Caco-2 (cell line): ENCODE measurements at regions of chr2 and their contacts with region 1.

Region 1: DNA sequence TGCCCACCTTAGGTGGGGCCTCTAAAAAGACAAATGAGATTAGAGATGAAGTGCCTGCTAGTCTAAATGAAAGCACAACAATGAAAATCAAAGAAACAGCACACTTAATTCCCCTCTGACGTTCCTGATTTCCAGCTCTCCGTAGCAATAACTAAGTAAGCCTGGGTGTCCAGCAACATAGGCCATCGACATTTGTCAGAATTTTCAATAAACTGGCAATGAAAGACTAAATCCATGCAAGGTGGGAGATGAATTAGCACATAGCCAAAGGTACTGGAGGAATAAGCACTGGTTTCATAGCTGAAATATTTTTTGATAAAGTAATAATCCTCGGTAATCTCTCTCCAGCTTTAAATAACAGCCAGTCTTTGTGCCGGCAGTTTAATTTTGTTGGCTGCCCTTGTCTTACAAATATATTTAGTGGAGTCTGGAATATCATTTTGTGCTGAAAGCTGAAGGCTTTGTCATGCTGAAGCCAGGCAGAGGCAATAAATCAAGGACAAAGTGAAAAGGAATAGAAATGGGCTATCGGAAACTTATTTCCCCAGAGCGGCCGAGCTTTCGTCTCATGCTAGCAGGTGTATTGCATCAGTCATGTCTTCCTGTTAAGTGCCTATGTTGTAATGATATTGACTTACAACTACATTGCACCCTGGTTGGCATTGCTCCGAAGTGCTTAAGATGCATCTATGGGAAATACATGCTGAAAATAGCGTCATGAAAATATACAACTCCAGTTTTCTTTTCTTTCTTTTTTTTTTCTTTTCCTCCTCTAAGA is 790.1 kb downstream of the CNTNAP5 start:
- DNase-seq: peak in 1 of 2 experiments; percentile 10
- H3K4me3 ChIP-seq: no peak overlapping the region
- H3K4me3 Mint-ChIP-seq: no peak overlapping the region
- H3K27ac Mint-ChIP-seq: no peak overlapping the region
- H3K4me1 ChIP-seq: peaks cover 22% of the 10 kb centered on the region
- H3K4me1 Mint-ChIP-seq: peaks cover 19% of the 10 kb centered on the region
- H3K27me3 ChIP-seq: no peaks in the 10 kb centered on the region
- H3K27me3 Mint-ChIP-seq: peaks cover 3% of the 10 kb centered on the region
- CTCF ChIP-seq: no peak

Region 2: DNA sequence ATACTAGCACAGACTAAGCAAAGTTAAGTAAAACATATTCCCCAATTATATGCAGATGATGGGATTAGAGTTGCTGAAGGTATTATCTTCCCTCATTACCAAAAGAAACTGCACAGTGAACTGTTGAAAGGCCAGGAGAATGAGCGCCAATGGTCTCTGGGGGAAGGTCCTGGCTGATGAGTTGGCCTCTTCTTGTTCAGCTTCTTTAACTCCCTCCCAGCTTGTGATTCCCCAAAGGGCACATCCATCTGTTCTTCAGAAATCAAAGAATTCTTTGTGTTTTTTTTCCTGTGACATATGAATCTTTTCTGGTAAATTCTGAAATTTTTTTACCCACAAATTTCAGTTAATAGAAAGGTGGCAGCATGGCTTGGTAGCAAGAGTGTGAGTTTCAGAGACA is 122.5 kb before region 1 on chr2:
- CTCF ChIA-PET with region 1: no interaction called
- POLR2A ChIA-PET with region 1: no interaction called
- intact Hi-C with region 1: no loop called
- DNase-seq: no peak
- H3K4me3 ChIP-seq: no peak overlapping the region
- H3K4me3 Mint-ChIP-seq: no peak overlapping the region
- H3K27ac Mint-ChIP-seq: no peak overlapping the region
- H3K4me1 ChIP-seq: no peaks in the 10 kb centered on the region
- H3K4me1 Mint-ChIP-seq: no peaks in the 10 kb centered on the region
- H3K27me3 ChIP-seq: no peaks in the 10 kb centered on the region
- H3K27me3 Mint-ChIP-seq: no peaks in the 10 kb centered on the region
- CTCF ChIP-seq: no peak

Region 3: GRCh38 chr2:124836430-124836829 is 21.3 kb after region 1 on chr2:
- CTCF ChIA-PET with region 1: no interaction called
- POLR2A ChIA-PET with region 1: no interaction called
- intact Hi-C with region 1: loop called (anchors 2 kb)
- DNase-seq: no peak
- H3K4me3 ChIP-seq: no peak overlapping the region
- H3K4me3 Mint-ChIP-seq: no peak overlapping the region
- H3K27ac Mint-ChIP-seq: no peak overlapping the region
- H3K4me1 ChIP-seq: no peaks in the 10 kb centered on the region
- H3K4me1 Mint-ChIP-seq: peaks cover 12% of the 10 kb centered on the region
- H3K27me3 ChIP-seq: no peaks in the 10 kb centered on the region
- H3K27me3 Mint-ChIP-seq: peaks cover 2% of the 10 kb centered on the region
- CTCF ChIP-seq: no peak